T-cell (primary cell): ENCODE measurements at regions of chr1 and their contacts with region 1.

Region 1: DNA sequence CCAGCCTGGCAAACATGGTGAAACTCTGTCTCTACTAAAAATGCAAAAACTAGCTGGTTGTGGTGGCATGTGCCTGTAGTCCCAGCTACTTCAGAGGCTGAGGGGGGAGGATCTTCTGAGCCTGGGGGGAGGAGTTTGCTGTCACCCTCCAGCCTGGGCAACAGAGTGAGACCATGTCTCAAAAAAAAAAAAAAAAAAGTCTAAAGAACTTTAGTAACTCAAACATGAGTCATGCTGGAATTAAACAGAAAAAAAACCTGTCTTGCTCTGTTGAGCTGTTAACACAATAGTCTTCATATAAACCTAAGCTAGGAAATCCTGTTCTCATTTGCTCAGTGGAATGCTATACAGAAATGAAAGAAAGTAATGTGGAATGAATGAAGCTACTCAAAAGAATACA is 16.7 kb upstream of the DISP1 start:
- DNase-seq: no peak
- ATAC-seq: no peak
- H3K4me3 ChIP-seq: no peak overlapping the region
- H3K4me3 Mint-ChIP-seq: no peak overlapping the region
- H3K27ac ChIP-seq: no peak overlapping the region
- H3K27ac Mint-ChIP-seq: no peak overlapping the region
- H3K4me1 ChIP-seq: peaks cover 0 to 3% of the 10 kb centered on the region in 2 experiments
- H3K4me1 Mint-ChIP-seq: peaks cover 5 to 6% (median 5%) of the 10 kb centered on the region in 3 donors
- H3K27me3 ChIP-seq: no peaks in the 10 kb centered on the region
- H3K27me3 Mint-ChIP-seq: peaks cover 0 to 2% of the 10 kb centered on the region in 2 donors

Region 2: DNA sequence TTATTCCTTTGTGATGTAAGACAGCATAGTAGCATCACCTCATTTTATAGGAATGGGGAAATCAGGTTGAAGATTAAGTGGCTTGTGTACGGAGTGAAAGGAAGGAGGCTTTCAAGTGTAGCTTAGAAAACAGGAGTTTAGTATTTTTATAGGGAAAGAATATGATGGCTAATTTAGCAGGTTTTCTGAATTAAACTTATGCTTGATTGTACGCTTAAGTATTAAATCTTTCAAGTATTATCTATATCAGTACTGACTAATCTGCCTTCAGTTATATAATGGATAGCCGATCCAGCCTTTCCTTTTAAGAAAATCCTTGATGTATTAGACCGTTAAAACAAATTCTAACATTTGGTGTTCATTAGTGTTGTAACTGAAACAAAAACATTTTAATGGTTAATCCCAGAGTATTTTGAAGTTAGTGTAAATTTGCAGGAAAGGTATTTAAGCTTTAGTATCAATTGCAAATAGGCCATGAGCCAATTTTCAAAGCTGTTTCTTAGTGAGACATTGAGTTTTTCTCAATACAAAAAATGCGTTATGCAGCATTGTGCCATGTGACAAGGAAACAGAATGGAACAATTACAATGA is 46.2 kb after region 1 on chr1:
- CTCF ChIA-PET with region 1: interaction called in 1 of 2 experiments, 12 read pairs
- POLR2A ChIA-PET with region 1: no interaction called
- DNase-seq: no peak
- ATAC-seq: no peak
- H3K4me3 ChIP-seq: no peak overlapping the region
- H3K4me3 Mint-ChIP-seq: no peak overlapping the region
- H3K27ac ChIP-seq: no peak overlapping the region
- H3K27ac Mint-ChIP-seq: no peak overlapping the region
- H3K4me1 ChIP-seq: no peaks in the 10 kb centered on the region
- H3K4me1 Mint-ChIP-seq: no peaks in the 10 kb centered on the region
- H3K27me3 ChIP-seq: no peaks in the 10 kb centered on the region
- H3K27me3 Mint-ChIP-seq: no peaks in the 10 kb centered on the region